ENCODE measurements at regions of chr11 and their contacts with region 1.

Region 1: DNA sequence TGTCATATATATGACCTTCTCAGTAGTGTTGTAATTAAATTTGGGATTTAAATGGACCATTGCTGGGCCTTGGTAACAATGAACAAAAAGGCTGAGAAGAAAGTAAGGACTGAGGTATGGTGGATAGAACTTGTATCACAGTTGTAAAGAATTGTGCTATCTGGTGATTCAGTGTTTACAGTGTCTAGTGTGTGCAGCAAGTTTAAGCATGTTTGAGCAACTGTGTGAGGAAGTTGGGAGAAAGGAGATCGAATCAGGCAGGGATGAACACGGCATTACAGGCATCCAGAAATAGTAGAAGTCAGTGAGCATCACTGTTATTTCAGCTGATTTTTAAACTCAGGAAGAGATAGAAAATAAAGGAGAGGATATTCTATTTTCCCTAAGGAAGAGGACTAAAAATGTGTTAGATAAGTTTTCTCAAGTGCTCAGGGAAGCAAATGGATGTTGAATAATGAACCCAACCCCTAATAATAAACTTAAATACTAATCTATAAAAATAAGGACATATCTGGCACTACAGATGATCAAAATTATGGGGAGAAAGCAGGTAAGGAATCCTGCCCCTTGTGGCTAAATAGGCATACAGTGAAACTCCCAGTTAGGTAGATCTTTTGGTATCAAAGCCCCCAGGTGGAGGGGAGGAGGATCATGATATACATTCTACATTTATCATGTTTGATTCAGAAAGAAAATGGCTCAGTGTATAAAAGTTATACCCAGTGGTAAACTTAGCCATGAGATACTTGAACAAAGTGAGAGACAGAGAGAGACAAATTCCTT is 361.0 kb upstream of the ANO3 start:
- DNase-seq: no peak
- ATAC-seq: no peak
- H3K4me3 ChIP-seq: no peak overlapping the region
- H3K27ac ChIP-seq: no peak overlapping the region
- H3K4me1 ChIP-seq: no peaks in the 10 kb centered on the region
- H3K27me3 ChIP-seq: no peaks in the 10 kb centered on the region
- CTCF ChIP-seq: no peak
- POLR2A ChIP-seq: no peak

Region 2: DNA sequence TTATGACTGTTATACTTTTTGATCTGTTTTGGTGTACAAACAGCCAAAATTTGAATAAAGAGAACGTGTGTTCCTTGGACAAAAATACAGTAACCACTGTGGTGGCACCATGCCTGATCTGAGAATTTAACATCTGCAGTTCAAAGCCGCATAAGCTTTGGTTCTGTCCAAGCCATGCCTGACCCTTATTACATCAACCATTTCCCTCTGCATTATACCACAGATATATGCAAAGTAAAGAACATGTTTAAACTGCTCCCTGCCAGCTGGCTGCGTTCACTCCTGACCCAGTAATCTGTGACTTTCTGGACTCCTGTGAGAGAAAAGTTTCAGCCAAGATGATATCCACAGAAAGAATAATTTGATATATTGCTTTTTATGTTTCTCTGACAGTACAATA is 529.5 kb before region 1 on chr11:
- intact Hi-C with region 1: no loop called
- DNase-seq: no peak
- ATAC-seq: no peak
- H3K4me3 ChIP-seq: no peak overlapping the region
- H3K27ac ChIP-seq: no peak overlapping the region
- H3K4me1 ChIP-seq: no peaks in the 10 kb centered on the region
- H3K27me3 ChIP-seq: no peaks in the 10 kb centered on the region
- CTCF ChIP-seq: no peak
- POLR2A ChIP-seq: no peak

Region 3: DNA sequence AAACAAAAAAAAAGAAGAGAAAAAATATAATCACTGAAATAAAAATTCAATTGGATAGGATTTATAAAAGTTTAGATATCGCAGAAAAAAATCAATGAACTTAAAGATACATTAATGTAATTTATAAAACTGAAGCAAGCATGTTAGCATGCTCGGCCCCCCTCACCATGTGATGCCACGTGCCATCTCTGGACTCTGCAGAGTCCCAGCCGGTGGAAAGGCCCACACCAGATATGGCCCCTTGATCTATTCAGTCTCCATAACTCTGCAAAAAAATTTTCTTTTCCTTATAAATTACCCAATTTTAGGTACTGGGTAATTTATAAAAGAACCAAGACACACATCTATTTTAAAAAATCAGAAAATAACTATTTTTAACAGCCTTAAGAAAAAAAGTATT is 115.0 kb before region 1 on chr11:
- intact Hi-C with region 1: no loop called
- DNase-seq: no peak
- ATAC-seq: no peak
- H3K4me3 ChIP-seq: no peak overlapping the region
- H3K27ac ChIP-seq: no peak overlapping the region
- H3K4me1 ChIP-seq: no peaks in the 10 kb centered on the region
- H3K27me3 ChIP-seq: no peaks in the 10 kb centered on the region
- CTCF ChIP-seq: no peak
- POLR2A ChIP-seq: no peak

Region 4: GRCh38 chr11:25927411-25927953 is 43.4 kb before region 1 on chr11:
- intact Hi-C with region 1: no loop called
- DNase-seq: no peak
- ATAC-seq: no peak
- H3K4me3 ChIP-seq: no peak overlapping the region
- H3K27ac ChIP-seq: no peak overlapping the region
- H3K4me1 ChIP-seq: no peaks in the 10 kb centered on the region
- H3K27me3 ChIP-seq: no peaks in the 10 kb centered on the region
- CTCF ChIP-seq: no peak
- POLR2A ChIP-seq: no peak

Region 5: GRCh38 chr11:26276798-26277424 is 306.0 kb after region 1 on chr11:
- intact Hi-C with region 1: loop called (anchors 10 kb)
- DNase-seq: peak; percentile 41 to 66 (median 58)
- ATAC-seq: peak; percentile 77
- H3K4me3 ChIP-seq: no peak overlapping the region
- H3K27ac ChIP-seq: no peak overlapping the region
- H3K4me1 ChIP-seq: no peaks in the 10 kb centered on the region
- H3K27me3 ChIP-seq: no peaks in the 10 kb centered on the region
- CTCF ChIP-seq: peak; percentile 81 to 95 (median 88)
- POLR2A ChIP-seq: no peak